Gastrocnemius medialis (tissue), 4 donors: ENCODE measurements at regions of chr5 and their contacts with region 1.

Region 1: DNA sequence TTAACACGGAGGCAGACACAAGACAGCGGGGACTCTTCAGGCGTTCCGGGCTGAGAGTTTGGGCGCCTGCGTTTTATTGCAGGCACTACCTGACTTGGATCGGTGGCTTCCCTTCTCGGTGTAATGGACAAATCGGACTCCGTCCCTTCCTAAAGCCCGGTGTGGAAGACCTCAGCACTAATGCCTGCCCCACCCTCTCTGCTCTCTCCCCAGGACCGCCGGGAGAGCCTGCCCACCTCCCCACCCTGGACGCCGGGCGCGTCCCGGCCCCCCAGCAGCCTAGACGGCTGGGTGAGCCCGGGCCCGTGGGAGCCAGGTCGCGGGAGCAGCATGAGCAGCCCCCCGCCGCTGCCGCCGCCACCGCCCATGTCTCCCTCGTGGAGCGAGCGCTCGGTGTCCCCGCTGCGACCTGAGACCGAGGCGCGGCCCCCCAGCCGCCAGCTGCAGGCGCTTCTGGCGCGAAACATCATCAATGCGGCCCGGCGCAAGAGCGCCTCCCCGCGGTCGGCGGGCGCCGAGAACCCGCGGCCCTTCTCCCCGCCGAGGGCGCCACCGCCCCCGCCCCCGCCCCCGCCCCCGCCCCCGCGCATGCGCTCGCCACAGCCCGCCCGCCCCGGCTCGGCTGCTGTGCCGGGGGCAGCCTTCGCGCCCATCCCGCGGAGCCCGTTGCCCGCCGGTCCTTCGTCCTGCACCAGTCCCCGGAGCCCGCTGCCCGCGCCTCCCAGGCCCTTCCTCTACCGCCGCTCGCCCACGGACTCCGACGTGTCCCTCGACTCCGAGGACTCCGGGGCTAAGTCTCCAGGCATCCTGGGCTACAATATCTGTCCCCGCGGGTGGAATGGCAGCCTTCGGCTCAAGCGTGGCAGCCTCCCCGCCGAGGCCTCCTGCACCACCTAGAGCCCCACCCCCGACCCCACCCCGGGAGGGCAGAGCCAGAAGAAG is 4.6 kb upstream of the MYOZ3 start:
- DNase-seq: peak in 1 of 2 donors; percentile 78
- ATAC-seq: peak; percentile 35 to 39
- H3K4me3 ChIP-seq: peak overlapping the region; percentile 55 to 79 (median 68)
- H3K27ac ChIP-seq: peak overlapping the region; percentile 99 to 100 (median 99)
- H3K4me1 ChIP-seq: peaks cover 64 to 74% of the 10 kb centered on the region in 2 donors
- H3K27me3 ChIP-seq: no peaks in the 10 kb centered on the region
- CTCF ChIP-seq: peak; percentile 48 to 92 (median 83)
- POLR2A ChIP-seq: peak; percentile 56 to 67

Region 2: DNA sequence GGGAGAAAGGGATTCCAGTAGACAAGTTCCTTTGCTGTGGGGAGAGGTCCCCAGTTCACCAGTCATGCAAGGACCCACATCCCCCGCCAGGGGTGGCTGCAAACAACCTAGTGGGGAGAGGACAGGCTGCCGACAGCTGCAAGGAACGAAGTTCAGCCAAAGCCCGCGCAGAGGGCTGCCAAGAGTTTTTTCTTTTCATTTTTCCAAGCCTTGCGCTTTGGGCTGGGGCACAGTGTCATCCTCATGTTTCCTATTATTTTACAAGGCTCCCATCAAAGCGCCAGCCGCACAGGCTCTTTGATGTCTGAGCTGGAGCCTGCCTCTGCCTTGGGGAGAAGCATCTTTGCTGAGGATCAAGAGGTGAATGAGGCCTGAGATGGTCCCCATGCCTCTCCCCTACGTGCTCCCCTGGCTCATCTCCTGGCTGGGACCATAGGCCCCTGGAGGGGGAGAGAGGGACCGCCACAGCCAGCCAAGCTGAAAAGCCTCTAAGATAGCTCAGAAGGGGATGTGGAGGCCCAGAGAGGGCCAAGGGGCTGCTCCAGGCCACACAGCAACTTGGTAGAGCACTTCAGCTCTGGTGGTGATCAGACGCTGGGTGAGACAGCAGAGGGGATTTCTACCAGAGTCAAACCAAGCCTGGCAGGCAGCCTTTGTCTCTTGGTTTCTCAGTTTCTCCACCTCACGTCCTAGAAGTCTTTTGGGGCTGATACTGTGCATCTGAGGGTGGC is 66.4 kb before region 1 on chr5:
- in situ Hi-C with region 1: loop called in 2 of 4 experiments (anchors 10 kb)
- intact Hi-C with region 1: loop called (anchors 1 kb)
- DNase-seq: peak; percentile 56 to 81
- ATAC-seq: peak; percentile 82 to 88
- H3K4me3 ChIP-seq: no peak overlapping the region
- H3K27ac ChIP-seq: peak overlapping the region; percentile 58 to 72 (median 68)
- H3K4me1 ChIP-seq: peaks cover 51 to 67% of the 10 kb centered on the region in 2 donors
- H3K27me3 ChIP-seq: no peaks in the 10 kb centered on the region
- CTCF ChIP-seq: peak; percentile 76 to 93 (median 89)
- POLR2A ChIP-seq: no peak

Region 3: GRCh38 chr5:150613991-150614660 is 42.3 kb before region 1 on chr5:
- in situ Hi-C with region 1: no loop called
- intact Hi-C with region 1: loop called (anchors 5 kb)
- DNase-seq: no peak
- ATAC-seq: no peak
- H3K4me3 ChIP-seq: no peak overlapping the region
- H3K27ac ChIP-seq: peak overlapping the region; percentile 94 to 98 (median 97)
- H3K4me1 ChIP-seq: peaks cover 97% of the 10 kb centered on the region in 2 donors
- H3K27me3 ChIP-seq: no peaks in the 10 kb centered on the region
- CTCF ChIP-seq: no peak
- POLR2A ChIP-seq: no peak

Region 4: GRCh38 chr5:151020304-151021110 is 364.0 kb after region 1 on chr5 and contains the start of gene GPX3:
- in situ Hi-C with region 1: no loop called
- intact Hi-C with region 1: loop called (anchors 10 kb)
- DNase-seq: peak; percentile 97 to 98
- ATAC-seq: peak; percentile 57 to 61
- H3K4me3 ChIP-seq: peak within 1 kb of the TSS; percentile 84 to 97 (median 94)
- H3K27ac ChIP-seq: peak within 1 kb of the TSS; percentile 94 to 99 (median 96)
- H3K4me1 ChIP-seq: peaks cover 46 to 48% of the 10 kb centered on the region in 2 donors
- H3K27me3 ChIP-seq: no peaks in the 10 kb centered on the region
- CTCF ChIP-seq: peak in 1 of 5 experiments; percentile 7
- POLR2A ChIP-seq: peak; percentile 96 to 99
- total RNA-seq, gene GPX3: 504 to 1,227 (median 655) TPM